ENCODE measurements at regions of chr1 and their contacts with region 1.

Region 1: GRCh38 chr1:203937644-203938330 is 76.4 kb downstream of the SNRPE start:
- DNase-seq: no peak
- ATAC-seq: no peak
- H3K4me3 ChIP-seq: no peak overlapping the region
- H3K27ac ChIP-seq: no peak overlapping the region
- H3K4me1 ChIP-seq: no peaks in the 10 kb centered on the region
- H3K27me3 ChIP-seq: no peaks in the 10 kb centered on the region
- CTCF ChIP-seq: no peak

Region 2: GRCh38 chr1:203898458-203899244 is 39.1 kb before region 1 on chr1:
- CTCF ChIA-PET with region 1: no interaction called
- POLR2A ChIA-PET with region 1: interaction called, 26 read pairs
- in situ Hi-C with region 1: no loop called
- intact Hi-C with region 1: no loop called
- DNase-seq: no peak
- ATAC-seq: no peak
- H3K4me3 ChIP-seq: no peak overlapping the region
- H3K27ac ChIP-seq: no peak overlapping the region
- H3K4me1 ChIP-seq: no peaks in the 10 kb centered on the region
- H3K27me3 ChIP-seq: no peaks in the 10 kb centered on the region
- CTCF ChIP-seq: no peak

Region 3: GRCh38 chr1:203911806-203912205 is 26.0 kb before region 1 on chr1:
- CTCF ChIA-PET with region 1: no interaction called
- POLR2A ChIA-PET with region 1: no interaction called
- in situ Hi-C with region 1: no loop called
- intact Hi-C with region 1: no loop called
- DNase-seq: no peak
- ATAC-seq: no peak
- H3K4me3 ChIP-seq: no peak overlapping the region
- H3K27ac ChIP-seq: no peak overlapping the region
- H3K4me1 ChIP-seq: peaks cover 6% of the 10 kb centered on the region
- H3K27me3 ChIP-seq: no peaks in the 10 kb centered on the region
- CTCF ChIP-seq: no peak

Region 4: GRCh38 chr1:204171751-204172178 is 234.0 kb after region 1 on chr1:
- CTCF ChIA-PET with region 1: no interaction called
- POLR2A ChIA-PET with region 1: no interaction called
- in situ Hi-C with region 1: no loop called
- intact Hi-C with region 1: no loop called
- DNase-seq: peak; percentile 71
- ATAC-seq: no peak; the same call in 1 of the 2 replicates
- H3K4me3 ChIP-seq: no peak overlapping the region
- H3K27ac ChIP-seq: no peak overlapping the region
- H3K4me1 ChIP-seq: no peaks in the 10 kb centered on the region
- H3K27me3 ChIP-seq: 0 out of 2 replicates have a peak, but pooled peaks cover 6% of the 10 kb centered on the region
- CTCF ChIP-seq: no peak